ENCODE measurements at regions of chr1 and their contacts with region 1.

Region 1: GRCh38 chr1:105608713-105609112 is 1447.8 kb upstream of the PRMT6 start:
- DNase-seq: no peak
- ATAC-seq: no peak

Region 2: GRCh38 chr1:104780470-104781078 is 828.1 kb before region 1 on chr1:
- intact Hi-C with region 1: loop called in 1 of 2 experiments (anchors 5 kb)
- DNase-seq: no peak
- ATAC-seq: no peak